Brain microvascular endothelial cell (primary cell): ENCODE measurements at regions of chr3 and their contacts with region 1.

Region 1: DNA sequence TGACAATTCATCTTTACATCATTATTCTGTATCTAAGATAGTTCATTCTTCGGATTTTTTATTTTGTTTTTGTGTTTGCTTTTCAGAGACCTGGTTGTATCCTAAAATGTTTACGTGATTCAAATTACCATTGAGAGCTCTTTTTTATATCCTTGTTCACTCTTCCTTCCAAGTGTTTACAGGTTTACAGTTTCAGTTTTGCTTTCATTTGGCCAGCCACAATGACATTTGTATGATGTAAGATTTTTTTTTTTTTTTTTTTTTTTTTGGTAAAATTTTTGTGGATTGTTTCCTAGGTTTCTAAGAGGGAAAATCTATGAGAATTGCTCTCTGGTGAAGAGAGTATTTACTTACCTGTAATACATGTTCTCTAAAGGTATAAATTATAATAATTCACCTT is 55.0 kb downstream of the SETD5 start:
- DNase-seq: no peak
- H3K4me3 ChIP-seq: no peak overlapping the region
- H3K27ac ChIP-seq: no peak overlapping the region
- H3K27me3 ChIP-seq: no peaks in the 10 kb centered on the region
- CTCF ChIP-seq: no peak

Region 2: GRCh38 chr3:9362731-9363530 is 89.5 kb before region 1 on chr3 and contains the start of gene THUMPD3:
- in situ Hi-C with region 1: loop called (anchors 25 kb)
- DNase-seq: peak; percentile 88
- H3K4me3 ChIP-seq: peak within 1 kb of the TSS; percentile 69
- H3K27ac ChIP-seq: peak within 1 kb of the TSS; percentile 96
- H3K27me3 ChIP-seq: no peaks in the 10 kb centered on the region
- CTCF ChIP-seq: no peak